ENCODE measurements at regions of chr17 and their contacts with region 1.

Region 1: DNA sequence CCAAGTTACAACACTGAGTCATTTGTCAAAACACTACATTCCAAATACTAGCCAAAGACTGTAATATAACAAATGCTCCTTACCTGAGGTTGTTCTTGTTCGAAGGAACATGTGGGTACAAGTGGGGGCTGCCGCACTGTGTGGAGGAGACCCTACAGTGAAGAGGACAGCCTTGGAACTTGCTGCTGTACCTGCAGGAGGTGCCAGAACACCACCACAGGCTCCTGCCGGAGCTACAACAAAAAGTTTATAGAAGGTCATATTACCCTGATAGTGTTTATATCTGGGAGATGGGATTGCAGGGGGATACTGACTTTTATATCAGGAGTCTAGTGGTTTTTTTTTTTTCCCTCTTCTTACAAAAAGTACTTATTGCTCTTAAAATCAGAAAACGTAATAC is 37.8 kb upstream of the ALDH3A1 start:
- DNase-seq: no peak
- H3K4me3 ChIP-seq: no peak overlapping the region
- H3K27ac ChIP-seq: no peak overlapping the region
- H3K4me1 ChIP-seq: no peaks in the 10 kb centered on the region
- H3K27me3 ChIP-seq: no peaks in the 10 kb centered on the region
- CTCF ChIP-seq: peak; percentile 47 to 59 (median 54)
- EP300 ChIP-seq: no peak
- POLR2A ChIP-seq: no peak
- RAD21 ChIP-seq: peak; percentile 73 to 78

Region 2: GRCh38 chr17:19897901-19898300 is 112.0 kb after region 1 on chr17:
- CTCF ChIA-PET with region 1: interaction called, 11 read pairs
- POLR2A ChIA-PET with region 1: no interaction called
- DNase-seq: no peak
- H3K4me3 ChIP-seq: no peak overlapping the region
- H3K27ac ChIP-seq: no peak overlapping the region
- H3K4me1 ChIP-seq: no peaks in the 10 kb centered on the region; a peak in 1 of 7 replicates
- H3K27me3 ChIP-seq: no peaks in the 10 kb centered on the region
- CTCF ChIP-seq: no peak
- EP300 ChIP-seq: no peak
- POLR2A ChIP-seq: no peak
- RAD21 ChIP-seq: no peak